PC-3 (cell line): ENCODE measurements at regions of chr2 and their contacts with region 1.

Region 1: DNA sequence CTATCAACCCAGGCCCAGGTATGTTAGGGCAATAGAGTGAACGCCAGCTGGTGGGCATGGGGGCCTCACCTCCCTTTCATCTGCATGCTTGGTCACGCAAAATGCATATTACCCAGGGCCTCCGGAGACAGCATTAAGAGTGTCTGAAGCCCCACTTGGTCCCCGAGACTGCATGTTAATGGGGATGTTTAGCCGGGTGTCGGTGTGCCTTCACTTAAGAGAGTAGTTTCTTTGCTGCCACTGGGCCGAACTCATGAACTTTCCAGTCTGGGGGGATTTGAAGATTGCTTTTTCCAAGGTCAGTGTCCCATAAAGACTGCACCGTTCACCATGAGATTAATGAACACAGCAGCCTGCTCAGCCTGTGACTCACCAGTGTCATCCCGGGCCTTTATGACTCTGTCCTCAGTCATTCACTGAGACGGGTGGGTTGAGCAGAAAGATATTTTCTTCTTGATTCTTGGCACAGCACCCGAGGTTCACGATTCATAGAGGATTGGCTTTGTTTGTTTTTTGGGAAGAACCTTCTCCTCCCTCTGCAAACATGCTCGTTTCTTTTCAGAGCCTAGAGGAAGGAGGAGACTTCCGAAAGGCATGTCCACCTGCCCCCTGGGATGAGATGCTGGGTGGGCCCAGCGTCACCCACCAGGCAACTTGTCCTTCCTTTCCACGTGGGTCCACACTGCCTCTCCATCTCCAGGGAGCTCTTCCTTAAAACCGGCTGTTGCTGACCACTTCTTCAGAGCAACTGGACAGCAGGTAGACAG is 199.1 kb downstream of the GLI2 start:
- DNase-seq: peak; percentile 98
- ATAC-seq: peak; percentile 76
- H3K4me3 ChIP-seq: peak overlapping the region; percentile 51
- H3K27ac ChIP-seq: peak overlapping the region; percentile 93
- H3K4me1 ChIP-seq: peaks cover 72% of the 10 kb centered on the region
- H3K27me3 ChIP-seq: no peaks in the 10 kb centered on the region
- CTCF ChIP-seq: no peak

Region 2: GRCh38 chr2:120486441-120487378 is 448.0 kb before region 1 on chr2:
- CTCF ChIA-PET with region 1: no interaction called
- POLR2A ChIA-PET with region 1: no interaction called
- intact Hi-C with region 1: no loop called
- DNase-seq: peak; percentile 64
- ATAC-seq: peak; percentile 80
- H3K4me3 ChIP-seq: no peak overlapping the region
- H3K27ac ChIP-seq: no peak overlapping the region
- H3K4me1 ChIP-seq: peaks cover 9% of the 10 kb centered on the region
- H3K27me3 ChIP-seq: no peaks in the 10 kb centered on the region
- CTCF ChIP-seq: no peak

Region 3: DNA sequence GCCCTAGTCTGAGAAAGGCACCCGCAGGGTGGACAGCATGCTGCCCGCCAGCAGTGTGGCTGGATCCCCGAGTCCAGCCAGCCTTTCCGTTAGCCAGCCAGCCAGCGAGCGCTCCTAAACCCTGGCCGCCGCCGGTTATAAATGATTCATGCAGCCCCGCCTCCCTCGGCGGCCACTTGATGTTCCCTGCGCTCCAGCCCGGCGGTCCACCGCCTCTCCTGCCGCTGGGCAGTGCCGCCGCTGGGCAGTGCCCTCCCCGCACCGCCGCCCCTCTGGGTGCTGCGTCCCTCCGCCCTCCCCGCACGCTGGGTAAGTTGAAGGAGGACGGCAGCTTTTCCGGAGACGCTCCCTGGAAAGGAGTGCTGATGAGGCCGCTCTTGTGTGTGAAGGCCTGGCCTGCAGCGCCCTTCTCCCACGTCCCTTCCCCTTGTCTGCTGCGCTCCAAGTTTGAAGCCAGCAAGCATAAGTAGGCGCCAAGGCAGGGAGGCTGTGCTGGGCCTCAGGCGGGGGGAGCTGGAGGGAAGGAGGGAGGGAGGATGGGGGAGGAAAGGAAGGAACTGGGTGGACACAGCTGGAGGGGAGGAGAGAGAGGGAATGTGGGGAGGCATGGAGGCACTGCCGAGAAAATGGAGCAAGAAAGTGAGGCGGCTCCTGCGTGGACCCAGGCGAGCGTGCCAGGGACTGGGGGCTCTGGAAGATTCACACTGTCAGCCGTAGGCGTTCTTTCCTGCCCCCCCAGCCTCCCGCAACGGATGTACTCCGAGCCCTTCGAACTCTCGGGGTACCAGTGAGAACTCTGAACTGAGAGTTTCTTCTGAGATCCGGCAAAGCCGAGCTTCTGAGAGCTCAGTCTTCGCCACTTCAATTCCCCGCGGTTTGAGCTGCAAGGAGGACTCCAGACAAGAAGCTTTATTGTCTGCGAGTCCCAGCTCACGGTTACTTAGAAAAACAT is 67.2 kb before region 1 on chr2:
- CTCF ChIA-PET with region 1: no interaction called
- POLR2A ChIA-PET with region 1: no interaction called
- intact Hi-C with region 1: loop called (anchors 5 kb)
- DNase-seq: peak; percentile 64
- ATAC-seq: peak; percentile 96
- H3K4me3 ChIP-seq: peak overlapping the region; percentile 46; the same call in 1 of the 2 replicates
- H3K27ac ChIP-seq: no peak overlapping the region
- H3K4me1 ChIP-seq: peaks cover 21% of the 10 kb centered on the region
- H3K27me3 ChIP-seq: no peaks in the 10 kb centered on the region
- CTCF ChIP-seq: no peak

Region 4: DNA sequence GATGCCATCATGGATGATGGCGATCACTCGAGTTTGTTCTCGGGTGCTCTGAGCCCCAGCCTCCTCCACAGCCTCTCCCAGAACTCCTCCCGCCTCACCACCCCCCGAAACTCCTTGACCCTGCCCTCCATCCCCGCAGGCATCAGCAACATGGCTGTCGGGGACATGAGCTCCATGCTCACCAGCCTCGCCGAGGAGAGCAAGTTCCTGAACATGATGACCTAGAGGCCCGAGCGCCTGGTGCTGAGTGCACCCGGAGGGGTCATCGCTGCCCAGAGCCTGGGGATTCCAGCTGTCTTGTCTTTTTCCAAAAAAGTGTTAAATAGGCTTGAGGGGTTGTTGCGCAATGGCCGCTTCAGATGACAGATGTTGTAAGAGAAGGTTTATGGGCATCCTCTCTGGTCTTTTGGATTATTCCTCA is 55.7 kb after region 1 on chr2:
- CTCF ChIA-PET with region 1: no interaction called
- POLR2A ChIA-PET with region 1: no interaction called
- intact Hi-C with region 1: no loop called
- DNase-seq: no peak
- ATAC-seq: no peak
- H3K4me3 ChIP-seq: no peak overlapping the region
- H3K27ac ChIP-seq: no peak overlapping the region
- H3K4me1 ChIP-seq: no peaks in the 10 kb centered on the region
- H3K27me3 ChIP-seq: no peaks in the 10 kb centered on the region
- CTCF ChIP-seq: no peak

Region 5: DNA sequence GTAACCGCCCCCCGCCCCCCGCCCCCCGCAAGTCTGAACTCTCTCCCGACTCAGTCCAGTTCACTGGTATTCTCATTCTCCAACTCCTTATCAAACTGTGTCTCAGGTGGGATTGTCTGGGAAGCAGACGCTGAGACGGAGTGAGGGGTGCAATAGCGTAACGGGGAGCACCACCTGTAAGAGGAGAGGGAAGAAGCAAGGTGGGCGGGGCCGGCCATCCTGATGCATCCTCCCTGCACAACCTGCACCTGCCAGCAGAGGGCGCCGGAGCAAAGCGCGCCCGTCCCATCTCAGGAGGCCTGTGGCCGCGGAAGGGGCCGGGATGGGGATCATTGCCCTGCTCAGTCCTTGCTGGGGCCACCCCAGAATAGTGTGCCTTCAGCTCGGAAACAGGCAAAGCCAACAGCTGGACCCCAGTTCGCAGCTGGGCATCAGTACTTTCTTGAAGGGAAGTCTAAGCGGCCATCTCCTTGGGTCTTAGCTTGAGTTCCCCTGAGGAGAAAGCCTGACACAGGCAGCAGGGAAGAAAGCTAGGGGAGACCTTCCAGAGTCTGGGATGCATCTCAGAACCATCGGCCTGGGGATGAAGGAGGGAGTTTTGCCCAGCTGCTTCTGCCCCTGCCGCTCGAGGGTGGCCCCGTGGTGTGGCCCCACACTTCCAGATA is 142.3 kb after region 1 on chr2:
- CTCF ChIA-PET with region 1: no interaction called
- POLR2A ChIA-PET with region 1: no interaction called
- intact Hi-C with region 1: loop called (anchors 5 kb)
- DNase-seq: peak; percentile 81
- ATAC-seq: peak; percentile 48
- H3K4me3 ChIP-seq: peak overlapping the region; percentile 38; the same call in 1 of the 2 replicates
- H3K27ac ChIP-seq: no peak overlapping the region
- H3K4me1 ChIP-seq: peaks cover 30% of the 10 kb centered on the region
- H3K27me3 ChIP-seq: no peaks in the 10 kb centered on the region
- CTCF ChIP-seq: peak; percentile 96